H1 (cell line): ENCODE measurements at regions of chr10 and their contacts with region 1.

Region 1: GRCh38 chr10:116796910-116797513 is 52.3 kb upstream of the ENO4 start:
- DNase-seq: peak; percentile 49 to 90
- H3K4me3 ChIP-seq: no peak overlapping the region
- H3K27ac ChIP-seq: no peak overlapping the region
- H3K4me1 ChIP-seq: peaks cover 2 to 8% (median 5%) of the 10 kb centered on the region in 4 experiments; a peak in 6 of 7 replicates
- H3K27me3 ChIP-seq: 0 out of 7 replicates have a peak, but pooled peaks cover 0 to 4% (median 1%) of the 10 kb centered on the region in 4 experiments
- CTCF ChIP-seq: peak; percentile 91 to 97 (median 93)
- EP300 ChIP-seq: no peak
- POLR2A ChIP-seq: no peak
- RAD21 ChIP-seq: peak; percentile 99

Region 2: DNA sequence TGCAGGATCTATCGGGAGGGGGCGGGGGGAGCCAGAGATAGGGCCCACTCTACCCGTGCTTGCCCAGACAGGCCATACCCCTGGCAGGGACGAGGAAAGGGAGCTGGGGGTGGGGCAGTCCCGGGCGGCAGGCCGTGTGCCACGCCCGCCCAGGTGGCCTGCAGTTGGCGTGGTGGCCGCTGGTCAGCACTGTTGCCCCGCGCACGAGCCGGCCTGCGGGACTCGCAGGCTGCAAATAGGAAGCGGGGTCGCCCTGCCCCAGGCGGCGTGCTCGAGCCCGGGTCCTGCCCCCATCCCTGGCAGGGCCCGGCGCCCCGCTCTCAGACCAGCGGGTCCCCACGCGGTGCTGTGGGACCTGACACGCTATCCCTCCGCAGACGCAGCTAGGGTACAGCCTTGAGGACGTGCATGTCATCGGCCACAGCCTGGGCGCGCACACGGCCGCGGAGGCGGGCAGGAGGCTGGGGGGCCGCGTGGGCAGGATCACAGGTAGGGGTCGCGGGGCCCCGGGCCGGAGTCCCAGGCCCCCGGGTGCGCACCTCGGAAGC is 169.6 kb before region 1 on chr10:
- CTCF ChIA-PET with region 1: interaction called, 13 read pairs
- POLR2A ChIA-PET with region 1: no interaction called
- DNase-seq: peak; percentile 31 to 67
- H3K4me3 ChIP-seq: peak overlapping the region; percentile 44 to 75 (median 50)
- H3K27ac ChIP-seq: no peak overlapping the region
- H3K4me1 ChIP-seq: no peaks in the 10 kb centered on the region
- H3K27me3 ChIP-seq: peaks cover 0 to 4% (median 0%) of the 10 kb centered on the region in 4 experiments; a peak in 3 of 7 replicates
- CTCF ChIP-seq: peak; percentile 70 to 93 (median 92)
- EP300 ChIP-seq: no peak
- POLR2A ChIP-seq: no peak
- RAD21 ChIP-seq: peak; percentile 80 to 90

Region 3: GRCh38 chr10:116779076-116779687 is 17.8 kb before region 1 on chr10:
- CTCF ChIA-PET with region 1: interaction called, 177 read pairs
- POLR2A ChIA-PET with region 1: no interaction called
- DNase-seq: no peak
- H3K4me3 ChIP-seq: no peak overlapping the region
- H3K27ac ChIP-seq: no peak overlapping the region
- H3K4me1 ChIP-seq: no peaks in the 10 kb centered on the region; a peak in 1 of 7 replicates
- H3K27me3 ChIP-seq: no peaks in the 10 kb centered on the region
- CTCF ChIP-seq: no peak
- EP300 ChIP-seq: no peak
- POLR2A ChIP-seq: no peak
- RAD21 ChIP-seq: no peak

Region 4: GRCh38 chr10:116815641-116816601 is 18.9 kb after region 1 on chr10:
- CTCF ChIA-PET with region 1: interaction called, 177 read pairs
- POLR2A ChIA-PET with region 1: interaction called, 3 read pairs
- DNase-seq: no peak
- H3K4me3 ChIP-seq: no peak overlapping the region
- H3K27ac ChIP-seq: no peak overlapping the region
- H3K4me1 ChIP-seq: peaks cover 0 to 4% (median under 1%) of the 10 kb centered on the region in 4 experiments; a peak in 2 of 7 replicates
- H3K27me3 ChIP-seq: no peaks in the 10 kb centered on the region
- CTCF ChIP-seq: no peak
- EP300 ChIP-seq: no peak
- POLR2A ChIP-seq: no peak
- RAD21 ChIP-seq: no peak

Region 5: GRCh38 chr10:117112220-117112619 is 315.2 kb after region 1 on chr10:
- CTCF ChIA-PET with region 1: interaction called, 10 read pairs
- POLR2A ChIA-PET with region 1: no interaction called
- DNase-seq: no peak
- H3K4me3 ChIP-seq: no peak overlapping the region
- H3K27ac ChIP-seq: no peak overlapping the region
- H3K4me1 ChIP-seq: no peaks in the 10 kb centered on the region
- H3K27me3 ChIP-seq: no peaks in the 10 kb centered on the region; a peak in 1 of 7 replicates
- CTCF ChIP-seq: peak in 1 of 3 experiments; percentile 50; a peak in 1 of 4 replicates
- EP300 ChIP-seq: no peak
- POLR2A ChIP-seq: no peak
- RAD21 ChIP-seq: peak; percentile 30; a peak in 3 of 4 replicates

Region 6: DNA sequence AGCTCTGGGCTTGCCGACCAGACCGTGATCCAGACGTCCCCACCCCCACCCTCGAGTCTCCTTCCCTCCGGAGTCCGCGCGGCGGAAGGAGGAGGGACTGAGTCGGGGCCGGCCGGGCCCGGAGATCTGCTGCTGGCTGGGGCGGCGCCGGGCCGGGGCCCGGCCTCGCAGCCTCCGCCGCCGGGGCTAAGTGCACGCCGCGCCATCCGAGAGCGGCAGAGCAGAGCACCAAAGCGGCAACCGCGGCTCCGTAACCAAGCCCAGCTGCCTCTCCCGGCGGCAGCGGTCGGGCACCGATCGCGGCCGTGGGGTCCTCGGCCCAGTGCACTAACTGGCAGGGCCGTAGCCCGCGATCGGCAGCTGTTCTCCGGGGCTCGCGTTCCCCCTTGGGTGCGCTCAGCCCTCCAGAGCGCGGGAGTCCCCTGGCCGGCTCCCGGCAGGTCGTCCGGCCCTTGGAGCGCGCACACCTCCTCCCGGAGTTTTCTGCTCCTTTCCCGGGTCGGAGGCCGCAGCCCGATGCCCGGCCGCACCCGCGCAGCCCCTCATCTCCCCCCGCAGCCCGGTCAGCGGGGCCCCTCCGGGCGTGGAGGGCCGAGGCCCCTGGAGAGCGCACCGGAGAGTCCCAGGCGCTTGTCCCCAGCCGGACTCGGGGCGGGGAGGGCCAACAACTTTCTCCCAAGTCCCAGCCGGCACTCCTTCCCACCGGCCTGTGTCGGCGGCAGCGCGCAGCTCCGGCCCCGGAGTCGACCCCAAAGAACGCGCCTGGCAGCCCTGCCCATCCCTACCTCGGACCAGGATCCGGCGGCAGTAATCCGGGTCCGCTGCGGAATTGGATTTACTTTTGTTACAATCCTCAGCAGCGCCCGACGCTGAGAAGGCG is 340.3 kb after region 1 on chr10:
- CTCF ChIA-PET with region 1: interaction called, 15 read pairs
- POLR2A ChIA-PET with region 1: no interaction called
- DNase-seq: peak in 1 of 2 experiments; percentile 74
- H3K4me3 ChIP-seq: peak overlapping the region; percentile 10 to 55 (median 30); a peak in 7 of 8 replicates
- H3K27ac ChIP-seq: no peak overlapping the region
- H3K4me1 ChIP-seq: peaks cover 3 to 32% (median 16%) of the 10 kb centered on the region in 4 experiments
- H3K27me3 ChIP-seq: peaks cover 96 to 99% (median 98%) of the 10 kb centered on the region in 4 experiments
- CTCF ChIP-seq: no peak
- EP300 ChIP-seq: no peak
- POLR2A ChIP-seq: no peak
- RAD21 ChIP-seq: no peak